ENCODE measurements at regions of chr6 and their contacts with region 1.

Region 1: GRCh38 chr6:25992413-25993037 is 29.9 kb downstream of the TRIM38 start:
- DNase-seq: peak; percentile 88
- H3K27ac ChIP-seq: peak overlapping the region; percentile 87
- CTCF ChIP-seq: peak; percentile 99

Region 2: GRCh38 chr6:24719125-24719971 is 1273.2 kb before region 1 on chr6 and contains the start of gene C6orf62:
- CTCF ChIA-PET with region 1: no interaction called
- POLR2A ChIA-PET with region 1: interaction called, 11 read pairs
- DNase-seq: peak; percentile 34
- H3K27ac ChIP-seq: peak within 1 kb of the TSS; percentile 95
- CTCF ChIP-seq: no peak

Region 3: DNA sequence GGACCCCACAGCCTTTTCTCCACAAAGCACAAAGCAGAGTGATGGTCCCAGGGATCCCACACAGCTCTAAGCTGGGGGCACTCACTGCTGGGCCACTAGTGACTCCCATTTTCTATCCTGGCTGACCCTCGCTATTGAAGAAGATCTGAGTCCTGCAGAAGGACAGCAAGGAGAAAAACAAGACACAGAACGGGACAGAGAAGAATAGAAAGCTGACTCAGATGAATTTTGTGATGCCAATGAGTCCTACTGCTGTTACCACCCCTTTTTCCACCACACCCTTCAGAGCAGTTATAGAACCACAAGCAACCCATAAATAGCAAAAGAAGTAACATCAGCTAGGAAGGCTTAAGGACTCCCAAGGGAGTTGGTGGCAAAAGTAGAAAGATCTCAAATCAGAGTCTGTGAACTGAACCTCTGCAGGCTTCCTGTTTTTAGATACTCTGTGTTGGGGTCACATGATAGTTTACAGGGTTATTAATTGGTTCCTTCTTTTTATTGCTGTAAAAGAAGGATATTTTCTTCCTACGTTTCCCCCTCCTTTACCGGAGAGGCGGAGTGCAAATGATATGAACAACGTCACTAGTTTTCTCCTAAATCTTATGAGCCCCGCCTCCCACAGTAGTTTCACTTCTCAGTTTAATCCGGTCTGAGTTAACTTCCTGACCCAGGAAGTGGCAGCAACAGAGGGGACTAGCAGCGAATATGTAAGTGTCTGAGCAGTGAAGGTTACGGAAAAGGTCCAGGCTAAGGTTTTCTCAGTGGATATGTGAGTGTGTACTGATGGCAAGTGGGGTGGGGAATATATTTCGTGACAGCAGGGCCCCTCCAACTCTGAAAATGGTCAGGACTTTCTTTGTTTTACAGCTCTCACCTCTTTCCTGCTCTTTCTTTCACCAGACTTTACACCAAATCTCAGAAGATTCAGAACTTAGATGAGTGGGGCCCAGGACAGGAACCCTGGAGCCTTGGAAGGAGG is 30.1 kb before region 1 on chr6 and contains the start of gene TRIM38:
- CTCF ChIA-PET with region 1: interaction called, 11 read pairs
- POLR2A ChIA-PET with region 1: no interaction called
- DNase-seq: peak; percentile 79
- H3K27ac ChIP-seq: peak within 1 kb of the TSS; percentile 85
- CTCF ChIP-seq: no peak

Region 4: DNA sequence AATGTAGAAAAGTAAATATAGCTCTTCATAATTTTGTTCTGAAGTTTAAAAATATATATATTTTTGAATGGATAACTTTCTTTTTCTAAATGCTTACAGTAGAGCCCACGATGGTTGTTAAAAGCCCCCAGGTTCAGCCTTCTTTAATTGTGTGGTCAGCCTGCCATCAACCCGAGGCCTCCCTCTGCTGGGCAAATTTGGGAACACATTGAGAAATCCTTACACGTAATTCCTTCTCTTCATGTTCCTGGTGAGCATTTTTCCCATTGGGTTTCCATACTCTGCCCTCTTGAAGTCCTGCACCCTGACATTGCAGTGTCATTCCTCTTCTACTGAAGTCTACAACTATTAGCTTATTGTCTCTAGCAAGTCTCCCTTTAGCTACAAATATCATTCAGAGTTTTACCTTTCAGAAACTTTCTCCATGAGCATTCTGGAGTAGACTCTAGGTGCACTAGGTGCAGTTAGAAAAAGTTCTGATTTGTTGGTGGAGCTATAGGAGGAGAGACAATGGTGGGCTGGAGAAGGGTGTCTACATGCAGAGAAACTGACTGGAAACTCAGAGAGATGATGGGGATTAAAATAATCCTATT is 10.7 kb after region 1 on chr6:
- CTCF ChIA-PET with region 1: interaction called, 12 read pairs
- POLR2A ChIA-PET with region 1: no interaction called
- DNase-seq: peak; percentile 62
- H3K27ac ChIP-seq: no peak overlapping the region
- CTCF ChIP-seq: peak; percentile 89

Region 5: GRCh38 chr6:26017632-26017966 is 25.1 kb after region 1 on chr6:
- CTCF ChIA-PET with region 1: interaction called, 13 read pairs
- POLR2A ChIA-PET with region 1: interaction called, 5 read pairs
- DNase-seq: peak; percentile 81
- H3K27ac ChIP-seq: peak overlapping the region; percentile 88
- CTCF ChIP-seq: peak; percentile 56

Measured in RWPE1 (cell line).